SK-N-SH (cell line): ENCODE measurements at regions of chr1 and their contacts with region 1.

Region 1: GRCh38 chr1:11320153-11320936 is 47.3 kb downstream of the UBIAD1 start:
- DNase-seq: peak; percentile 76
- H3K4me3 ChIP-seq: no peak overlapping the region
- H3K27ac ChIP-seq: no peak overlapping the region
- H3K4me1 ChIP-seq: peaks cover 0 to 24% of the 10 kb centered on the region in 2 experiments; a peak in 1 of 4 replicates
- H3K27me3 ChIP-seq: no peaks in the 10 kb centered on the region
- CTCF ChIP-seq: peak; percentile 62
- EP300 ChIP-seq: no peak
- RAD21 ChIP-seq: peak; percentile 54

Region 2: GRCh38 chr1:11248155-11248554 is 72.2 kb before region 1 on chr1:
- CTCF ChIA-PET with region 1: no interaction called
- POLR2A ChIA-PET with region 1: no interaction called
- DNase-seq: no peak
- H3K4me3 ChIP-seq: no peak overlapping the region
- H3K27ac ChIP-seq: no peak overlapping the region
- H3K4me1 ChIP-seq: no peaks in the 10 kb centered on the region
- H3K27me3 ChIP-seq: no peaks in the 10 kb centered on the region
- CTCF ChIP-seq: no peak
- EP300 ChIP-seq: no peak
- RAD21 ChIP-seq: 0 out of 2 replicates have a peak, but pooled peaks have one; percentile 7

Region 3: GRCh38 chr1:11285883-11286734 is 34.2 kb before region 1 on chr1:
- CTCF ChIA-PET with region 1: interaction called, 22 read pairs
- POLR2A ChIA-PET with region 1: no interaction called
- DNase-seq: peak; percentile 49
- H3K4me3 ChIP-seq: no peak overlapping the region
- H3K27ac ChIP-seq: no peak overlapping the region
- H3K4me1 ChIP-seq: peaks cover 0 to 10% of the 10 kb centered on the region in 2 experiments; a peak in 2 of 4 replicates
- H3K27me3 ChIP-seq: no peaks in the 10 kb centered on the region
- CTCF ChIP-seq: peak; percentile 55
- EP300 ChIP-seq: no peak
- RAD21 ChIP-seq: peak; percentile 81

Region 4: DNA sequence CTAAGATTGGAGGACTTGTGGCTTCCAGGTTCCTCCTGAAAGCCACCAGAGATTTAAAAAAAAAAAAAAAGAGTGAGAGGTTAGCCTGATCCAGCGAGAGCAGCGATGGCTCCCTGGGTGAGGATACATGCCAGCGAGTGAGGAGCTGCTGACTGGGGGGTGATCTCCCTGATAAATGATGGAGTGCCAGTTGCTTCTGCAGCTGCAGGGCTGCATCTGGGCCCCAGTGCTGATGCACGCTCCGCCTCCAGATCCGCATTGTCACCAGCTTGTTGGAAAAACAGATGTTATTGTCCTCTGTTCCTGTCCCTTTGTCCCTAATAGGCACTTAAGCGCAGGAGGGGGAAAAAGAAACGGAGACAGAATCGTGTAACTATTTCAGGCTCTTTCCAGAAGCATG is 18.7 kb before region 1 on chr1:
- CTCF ChIA-PET with region 1: interaction called, 14 read pairs
- POLR2A ChIA-PET with region 1: interaction called, 3 read pairs
- DNase-seq: peak; percentile 91
- H3K4me3 ChIP-seq: no peak overlapping the region
- H3K27ac ChIP-seq: peak overlapping the region in 1 of 2 experiments; percentile 90; a peak in 2 of 4 replicates
- H3K4me1 ChIP-seq: peaks cover 0 to 20% of the 10 kb centered on the region in 2 experiments; a peak in 2 of 4 replicates
- H3K27me3 ChIP-seq: no peaks in the 10 kb centered on the region
- CTCF ChIP-seq: no peak
- EP300 ChIP-seq: peak in 1 of 2 experiments; percentile 82; a peak in 2 of 4 replicates
- RAD21 ChIP-seq: peak; percentile 22

Region 5: GRCh38 chr1:11331036-11331944 is 10.9 kb after region 1 on chr1:
- CTCF ChIA-PET with region 1: interaction called, 18 read pairs
- POLR2A ChIA-PET with region 1: no interaction called
- DNase-seq: no peak
- H3K4me3 ChIP-seq: no peak overlapping the region
- H3K27ac ChIP-seq: no peak overlapping the region
- H3K4me1 ChIP-seq: no peaks in the 10 kb centered on the region; a peak in 1 of 4 replicates
- H3K27me3 ChIP-seq: no peaks in the 10 kb centered on the region
- CTCF ChIP-seq: no peak
- EP300 ChIP-seq: no peak
- RAD21 ChIP-seq: no peak